ENCODE measurements at regions of chr6 and their contacts with region 1.

Region 1: GRCh38 chr6:35620706-35621105 is 68.0 kb downstream of the FKBP5 start:
- DNase-seq: no peak
- ATAC-seq: no peak
- H3K4me3 Mint-ChIP-seq: no peak overlapping the region
- H3K27ac Mint-ChIP-seq: no peak overlapping the region
- H3K4me1 Mint-ChIP-seq: no peaks in the 10 kb centered on the region
- H3K27me3 Mint-ChIP-seq: no peaks in the 10 kb centered on the region
- CTCF ChIP-seq: no peak

Region 2: GRCh38 chr6:34441526-34441925 is 1179.2 kb before region 1 on chr6:
- CTCF ChIA-PET with region 1: no interaction called
- POLR2A ChIA-PET with region 1: interaction called, 12 read pairs
- intact Hi-C with region 1: no loop called
- DNase-seq: no peak
- ATAC-seq: no peak
- H3K4me3 Mint-ChIP-seq: no peak overlapping the region
- H3K27ac Mint-ChIP-seq: no peak overlapping the region
- H3K4me1 Mint-ChIP-seq: peaks cover 5% of the 10 kb centered on the region
- H3K27me3 Mint-ChIP-seq: no peaks in the 10 kb centered on the region
- CTCF ChIP-seq: no peak

Measured in activated B cell treated with CpG ODN at 0.5 μM for 24 hours (primary cell).